ENCODE measurements at regions of chr4 and their contacts with region 1.

Region 1: DNA sequence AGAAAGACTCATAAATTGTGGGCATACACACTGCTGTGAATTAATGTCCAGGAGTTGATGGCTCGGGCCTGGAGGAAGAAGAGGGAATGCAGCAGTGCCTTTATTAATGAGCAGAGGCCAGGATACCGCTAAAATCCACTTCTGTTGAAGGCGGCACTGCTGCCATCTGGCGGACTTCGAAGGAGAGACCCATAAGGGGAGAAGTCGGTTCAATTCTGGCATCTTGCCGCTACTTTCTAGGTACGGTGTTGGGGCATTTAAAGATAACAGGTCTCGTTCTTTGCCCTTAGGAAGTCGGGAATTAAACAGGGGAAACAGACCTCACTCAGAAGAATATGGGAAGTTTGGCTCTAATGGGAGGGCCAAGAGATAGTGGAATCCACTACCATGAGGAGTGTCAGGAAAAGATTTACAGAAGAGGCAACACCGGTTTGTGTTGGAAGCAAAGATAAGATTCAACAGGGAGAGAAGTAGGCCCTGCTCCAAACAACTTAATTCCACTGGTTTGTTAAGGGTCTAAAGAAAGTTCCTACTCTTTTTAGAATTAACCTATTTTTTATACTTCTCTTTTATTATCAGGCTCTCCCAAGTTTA is 133.6 kb upstream of the GIMD1 start:
- DNase-seq: peak; percentile 58
- ATAC-seq: peak; percentile 98
- H3K4me3 ChIP-seq: no peak overlapping the region; a peak in 1 of 6 replicates
- H3K27ac ChIP-seq: no peak overlapping the region
- H3K4me1 ChIP-seq: peaks cover 10% of the 10 kb centered on the region; the same call in 1 of the 2 replicates
- H3K27me3 ChIP-seq: 0 out of 5 replicates have a peak, but pooled peaks cover 0 to 5% of the 10 kb centered on the region in 2 experiments
- CTCF ChIP-seq: peak; percentile 84
- EP300 ChIP-seq: no peak
- POLR2A ChIP-seq: no peak
- RAD21 ChIP-seq: peak; percentile 71

Region 2: DNA sequence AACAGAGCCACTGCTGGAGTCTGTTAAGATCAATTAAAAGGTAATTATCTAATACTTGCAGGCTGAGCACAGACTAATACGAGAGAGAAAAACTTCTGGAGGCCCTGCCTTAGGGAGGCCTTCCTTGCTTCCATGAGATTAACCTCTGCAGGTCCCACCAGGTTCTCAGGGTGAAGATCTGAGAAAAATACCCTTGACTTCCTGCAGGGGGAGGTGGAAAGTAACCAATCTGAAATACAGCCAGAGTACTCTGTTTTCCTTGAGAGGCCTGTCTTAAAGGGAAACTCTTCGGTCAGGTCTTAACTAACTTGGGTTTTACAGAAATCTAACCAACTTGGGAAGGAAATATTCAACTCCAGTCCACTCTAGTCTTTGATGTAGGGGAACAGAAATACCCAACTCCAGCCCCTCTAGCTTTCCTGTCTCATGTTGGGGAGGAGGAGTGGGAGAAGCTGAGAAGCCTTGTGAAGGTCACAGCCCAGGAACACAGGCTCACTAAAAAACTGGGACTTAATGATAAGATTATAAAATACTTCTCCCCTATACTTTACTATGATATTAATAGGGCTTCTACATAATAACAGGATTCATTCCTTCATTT is 263.3 kb before region 1 on chr4:
- CTCF ChIA-PET with region 1: interaction called, 4 read pairs
- POLR2A ChIA-PET with region 1: no interaction called
- in situ Hi-C with region 1: no loop called
- intact Hi-C with region 1: loop called (anchors 2 kb)
- DNase-seq: peak; percentile 61
- ATAC-seq: peak; percentile 99
- H3K4me3 ChIP-seq: no peak overlapping the region
- H3K27ac ChIP-seq: peak overlapping the region; percentile 47
- H3K4me1 ChIP-seq: peaks cover 15% of the 10 kb centered on the region
- H3K27me3 ChIP-seq: no peaks in the 10 kb centered on the region
- CTCF ChIP-seq: peak; percentile 68
- EP300 ChIP-seq: no peak
- POLR2A ChIP-seq: no peak
- RAD21 ChIP-seq: peak; percentile 45; the same call in 1 of the 2 replicates

Region 3: GRCh38 chr4:106329041-106329618 is 173.1 kb before region 1 on chr4:
- CTCF ChIA-PET with region 1: interaction called, 3 read pairs
- POLR2A ChIA-PET with region 1: no interaction called
- in situ Hi-C with region 1: no loop called
- intact Hi-C with region 1: loop called (anchors 2 kb)
- DNase-seq: peak; percentile 57
- ATAC-seq: peak; percentile 97
- H3K4me3 ChIP-seq: no peak overlapping the region
- H3K27ac ChIP-seq: peak overlapping the region; percentile 26
- H3K4me1 ChIP-seq: peaks cover 23% of the 10 kb centered on the region
- H3K27me3 ChIP-seq: no peaks in the 10 kb centered on the region
- CTCF ChIP-seq: peak; percentile 69
- EP300 ChIP-seq: no peak
- POLR2A ChIP-seq: no peak
- RAD21 ChIP-seq: no peak

Region 4: DNA sequence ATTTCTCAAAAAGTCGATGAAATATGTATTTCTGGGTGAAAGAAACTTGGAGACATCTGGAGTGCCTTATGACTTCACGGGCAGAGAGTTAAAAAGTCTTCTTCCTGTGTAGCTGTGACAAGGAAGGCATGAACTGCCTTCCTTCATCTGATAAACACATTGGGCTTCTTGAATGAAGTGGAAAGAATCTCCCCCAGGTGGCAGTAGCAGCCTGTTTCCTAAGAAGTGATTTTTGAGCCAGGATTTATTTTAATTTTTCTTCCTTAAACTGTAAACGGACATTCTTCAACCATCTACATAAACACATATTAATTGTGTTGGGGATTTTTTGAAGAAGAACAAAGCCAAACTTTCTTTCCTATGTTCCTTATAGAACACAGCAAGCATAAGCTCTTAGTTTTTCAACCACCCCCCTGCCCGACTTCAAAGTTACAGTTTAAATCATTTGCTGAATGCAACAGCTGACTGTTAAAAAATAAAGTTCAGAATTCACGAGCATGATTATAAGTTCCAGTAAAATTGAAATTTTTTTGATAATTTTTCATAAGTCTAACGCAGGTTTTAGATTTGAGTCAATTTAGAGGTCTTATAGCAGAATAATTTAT is 132.6 kb before region 1 on chr4:
- CTCF ChIA-PET with region 1: interaction called, 29 read pairs
- POLR2A ChIA-PET with region 1: no interaction called
- in situ Hi-C with region 1: loop called (anchors 5 kb)
- intact Hi-C with region 1: loop called (anchors 1 kb)
- DNase-seq: peak; percentile 42
- ATAC-seq: peak; percentile 67
- H3K4me3 ChIP-seq: no peak overlapping the region
- H3K27ac ChIP-seq: no peak overlapping the region
- H3K4me1 ChIP-seq: peaks cover 17% of the 10 kb centered on the region
- H3K27me3 ChIP-seq: no peaks in the 10 kb centered on the region
- CTCF ChIP-seq: peak; percentile 73
- EP300 ChIP-seq: no peak
- POLR2A ChIP-seq: no peak
- RAD21 ChIP-seq: peak; percentile 67; the same call in 1 of the 2 replicates

Region 5: GRCh38 chr4:106809076-106809475 is 306.9 kb after region 1 on chr4:
- CTCF ChIA-PET with region 1: no interaction called
- POLR2A ChIA-PET with region 1: no interaction called
- in situ Hi-C with region 1: no loop called
- intact Hi-C with region 1: loop called (anchors 2 kb)
- DNase-seq: peak; percentile 19
- ATAC-seq: peak; percentile 89
- H3K4me3 ChIP-seq: no peak overlapping the region
- H3K27ac ChIP-seq: no peak overlapping the region
- H3K4me1 ChIP-seq: no peaks in the 10 kb centered on the region
- H3K27me3 ChIP-seq: no peaks in the 10 kb centered on the region
- CTCF ChIP-seq: peak; percentile 69
- EP300 ChIP-seq: no peak
- POLR2A ChIP-seq: no peak
- RAD21 ChIP-seq: no peak

Measured in HepG2 (cell line).